Colonic mucosa (tissue), 4 donors: ENCODE measurements at regions of chr7 and their contacts with region 1.

Region 1: GRCh38 chr7:36291387-36292316 is 98.0 kb upstream of the ANLN start:
- DNase-seq: peak; percentile 91
- H3K4me3 ChIP-seq: peak overlapping the region; percentile 2
- H3K27ac ChIP-seq: peak overlapping the region; percentile 83
- H3K4me1 ChIP-seq: peaks cover 3% of the 10 kb centered on the region
- H3K27me3 ChIP-seq: no peaks in the 10 kb centered on the region
- CTCF ChIP-seq: peak; percentile 95

Region 2: GRCh38 chr7:35985126-35985754 is 306.4 kb before region 1 on chr7:
- intact Hi-C with region 1: loop called (anchors 2 kb)
- DNase-seq: peak; percentile 80
- H3K4me3 ChIP-seq: no peak overlapping the region
- H3K27ac ChIP-seq: no peak overlapping the region
- H3K4me1 ChIP-seq: no peaks in the 10 kb centered on the region
- H3K27me3 ChIP-seq: no peaks in the 10 kb centered on the region
- CTCF ChIP-seq: peak; percentile 90

Region 3: GRCh38 chr7:36084475-36085097 is 207.1 kb before region 1 on chr7:
- intact Hi-C with region 1: loop called (anchors 5 kb)
- DNase-seq: peak; percentile 67
- H3K4me3 ChIP-seq: no peak overlapping the region
- H3K27ac ChIP-seq: no peak overlapping the region
- H3K4me1 ChIP-seq: no peaks in the 10 kb centered on the region
- H3K27me3 ChIP-seq: no peaks in the 10 kb centered on the region
- CTCF ChIP-seq: peak; percentile 24

Region 4: GRCh38 chr7:36128448-36129047 is 163.1 kb before region 1 on chr7:
- intact Hi-C with region 1: loop called (anchors 5 kb)
- DNase-seq: peak; percentile 87
- H3K4me3 ChIP-seq: no peak overlapping the region
- H3K27ac ChIP-seq: peak overlapping the region; percentile 63
- H3K4me1 ChIP-seq: no peaks in the 10 kb centered on the region
- H3K27me3 ChIP-seq: no peaks in the 10 kb centered on the region
- CTCF ChIP-seq: peak; percentile 74